SK-N-SH (cell line): ENCODE measurements at regions of chr1 and their contacts with region 1.

Region 1: DNA sequence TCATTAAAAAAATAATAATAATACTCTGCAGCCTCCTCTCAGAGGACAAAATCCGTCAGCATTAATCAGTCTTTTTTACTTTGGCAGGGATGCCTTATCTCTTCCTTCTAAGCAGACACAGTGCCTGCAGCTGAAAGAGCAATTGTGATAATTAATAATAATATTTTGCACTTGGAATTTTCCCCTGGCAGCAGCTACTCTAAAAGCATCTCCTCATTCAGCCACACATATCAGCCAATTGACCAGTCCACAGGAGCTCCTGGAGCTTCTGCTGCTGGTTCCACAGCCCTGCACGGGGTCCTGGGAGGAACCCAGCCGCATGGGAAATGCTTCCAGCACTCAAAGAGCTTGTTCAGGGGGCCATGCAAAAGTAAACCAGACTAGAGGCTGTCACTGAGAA is 31.0 kb upstream of the VWA5B1 start:
- DNase-seq: peak; percentile 69
- H3K4me3 ChIP-seq: no peak overlapping the region
- H3K27ac ChIP-seq: peak overlapping the region in 1 of 2 experiments; percentile 77; a peak in 2 of 4 replicates
- H3K4me1 ChIP-seq: peaks cover 0 to 26% of the 10 kb centered on the region in 2 experiments; a peak in 2 of 4 replicates
- H3K27me3 ChIP-seq: peaks cover 11% of the 10 kb centered on the region; the same call in 1 of the 2 replicates
- CTCF ChIP-seq: no peak
- EP300 ChIP-seq: peak in 1 of 2 experiments; percentile 72; a peak in 2 of 4 replicates
- RAD21 ChIP-seq: peak; percentile 25; the same call in 1 of the 2 replicates

Region 2: DNA sequence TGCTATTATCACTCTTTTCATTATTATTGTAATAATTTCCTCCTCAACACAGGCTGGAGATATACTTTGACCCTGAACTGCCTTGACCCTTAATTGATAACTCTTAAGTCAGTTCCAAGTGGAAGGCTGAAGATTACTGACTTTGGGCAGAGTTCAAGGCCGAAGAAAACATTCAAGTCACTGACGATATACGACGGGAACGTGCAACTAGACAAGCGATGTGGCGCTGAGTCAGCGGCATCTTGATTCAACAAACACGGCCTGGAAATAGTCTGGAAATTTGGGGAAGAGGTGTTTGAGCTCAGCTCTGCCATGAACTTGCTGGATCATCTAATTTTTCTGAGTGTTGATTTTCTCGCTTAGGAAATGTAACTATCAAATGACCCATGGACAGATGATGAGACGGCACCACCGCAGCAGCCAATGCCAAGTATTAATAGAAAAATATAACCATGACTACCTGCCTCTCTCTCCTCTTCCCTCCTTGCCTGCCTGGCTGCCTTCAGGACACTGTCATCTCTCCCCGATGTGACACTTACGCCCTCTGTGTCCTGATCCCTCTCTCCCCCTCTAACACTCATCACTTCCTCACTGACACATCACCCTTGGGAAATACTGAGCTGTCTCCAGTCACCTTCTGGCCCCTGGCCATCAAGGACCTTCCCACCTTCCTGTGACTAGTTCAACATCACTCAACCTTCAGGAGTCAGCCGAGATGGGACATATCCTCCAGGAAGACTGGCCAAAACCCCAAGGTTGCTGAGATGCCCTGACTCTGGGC is 509.4 kb before region 1 on chr1:
- CTCF ChIA-PET with region 1: no interaction called
- POLR2A ChIA-PET with region 1: no interaction called
- DNase-seq: no peak
- H3K4me3 ChIP-seq: no peak overlapping the region
- H3K27ac ChIP-seq: no peak overlapping the region; a peak in 1 of 4 replicates
- H3K4me1 ChIP-seq: peaks cover 0 to 2% of the 10 kb centered on the region in 2 experiments; a peak in 1 of 4 replicates
- H3K27me3 ChIP-seq: no peaks in the 10 kb centered on the region
- CTCF ChIP-seq: no peak
- EP300 ChIP-seq: no peak
- RAD21 ChIP-seq: no peak

Region 3: GRCh38 chr1:20233394-20233793 is 26.3 kb before region 1 on chr1:
- CTCF ChIA-PET with region 1: interaction called, 10 read pairs
- POLR2A ChIA-PET with region 1: no interaction called
- DNase-seq: peak; percentile 55
- H3K4me3 ChIP-seq: no peak overlapping the region
- H3K27ac ChIP-seq: no peak overlapping the region
- H3K4me1 ChIP-seq: peaks cover 0 to 13% of the 10 kb centered on the region in 2 experiments; a peak in 2 of 4 replicates
- H3K27me3 ChIP-seq: peaks cover 12% of the 10 kb centered on the region; the same call in 1 of the 2 replicates
- CTCF ChIP-seq: peak; percentile 52
- EP300 ChIP-seq: no peak
- RAD21 ChIP-seq: peak; percentile 55

Region 4: GRCh38 chr1:20271498-20272400 is 12.1 kb after region 1 on chr1:
- CTCF ChIA-PET with region 1: interaction called, 16 read pairs
- POLR2A ChIA-PET with region 1: interaction called, 3 read pairs
- DNase-seq: peak; percentile 70
- H3K4me3 ChIP-seq: no peak overlapping the region
- H3K27ac ChIP-seq: peak overlapping the region in 1 of 2 experiments; percentile 84; a peak in 2 of 4 replicates
- H3K4me1 ChIP-seq: peaks cover 0 to 23% of the 10 kb centered on the region in 2 experiments; a peak in 2 of 4 replicates
- H3K27me3 ChIP-seq: no peaks in the 10 kb centered on the region; the same call in 1 of the 2 replicates
- CTCF ChIP-seq: no peak
- EP300 ChIP-seq: no peak
- RAD21 ChIP-seq: peak; percentile 44